ENCODE measurements at regions of chr19 and their contacts with region 1.

Region 1: DNA sequence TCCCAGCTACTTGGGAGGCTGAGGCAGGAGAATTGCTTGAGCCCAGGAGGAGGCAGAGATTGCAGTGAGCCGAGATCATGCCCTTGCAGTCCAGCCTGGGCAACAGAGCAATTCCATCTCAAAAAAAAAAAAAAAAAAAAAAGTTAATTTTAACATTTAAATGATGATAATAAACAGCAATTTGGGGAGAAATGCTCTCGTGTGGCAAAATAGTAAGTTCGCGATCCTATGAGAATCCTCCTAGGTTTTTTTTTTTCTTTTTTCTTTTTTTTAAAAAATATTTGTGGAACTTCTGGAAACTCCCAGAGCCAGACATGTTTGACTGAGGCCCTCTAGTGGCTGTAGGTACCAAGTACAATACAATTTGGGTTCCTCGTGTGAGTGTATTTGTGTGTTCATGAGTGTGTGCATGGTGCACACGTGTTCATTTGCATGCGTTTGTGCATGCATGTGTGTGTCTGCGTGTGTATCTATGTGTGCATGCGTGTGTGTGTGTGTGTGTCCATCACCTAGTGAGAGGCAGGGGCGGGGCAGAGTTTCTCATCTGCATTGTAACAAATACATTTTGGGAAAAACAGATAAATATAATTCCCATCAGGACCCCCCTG is 31.2 kb downstream of the TMPRSS9 start:
- DNase-seq: peak; percentile 76
- H3K4me3 Mint-ChIP-seq: no peak overlapping the region
- H3K27ac Mint-ChIP-seq: no peak overlapping the region
- H3K4me1 Mint-ChIP-seq: peaks cover 12% of the 10 kb centered on the region
- H3K27me3 Mint-ChIP-seq: no peaks in the 10 kb centered on the region
- CTCF ChIP-seq: peak; percentile 78

Region 2: GRCh38 chr19:2151339-2152229 is 239.6 kb before region 1 on chr19 and contains the start of gene AP3D1:
- CTCF ChIA-PET with region 1: interaction called, 11 read pairs
- POLR2A ChIA-PET with region 1: no interaction called
- intact Hi-C with region 1: loop called (anchors 1 kb)
- DNase-seq: peak; percentile 100
- H3K4me3 Mint-ChIP-seq: peak within 1 kb of the TSS; percentile 78
- H3K27ac Mint-ChIP-seq: peak within 1 kb of the TSS; percentile 55
- H3K4me1 Mint-ChIP-seq: peaks cover 16% of the 10 kb centered on the region
- H3K27me3 Mint-ChIP-seq: no peaks in the 10 kb centered on the region
- CTCF ChIP-seq: no peak
- total RNA-seq, gene AP3D1: 172 and 181 TPM in 2 replicates

Region 3: DNA sequence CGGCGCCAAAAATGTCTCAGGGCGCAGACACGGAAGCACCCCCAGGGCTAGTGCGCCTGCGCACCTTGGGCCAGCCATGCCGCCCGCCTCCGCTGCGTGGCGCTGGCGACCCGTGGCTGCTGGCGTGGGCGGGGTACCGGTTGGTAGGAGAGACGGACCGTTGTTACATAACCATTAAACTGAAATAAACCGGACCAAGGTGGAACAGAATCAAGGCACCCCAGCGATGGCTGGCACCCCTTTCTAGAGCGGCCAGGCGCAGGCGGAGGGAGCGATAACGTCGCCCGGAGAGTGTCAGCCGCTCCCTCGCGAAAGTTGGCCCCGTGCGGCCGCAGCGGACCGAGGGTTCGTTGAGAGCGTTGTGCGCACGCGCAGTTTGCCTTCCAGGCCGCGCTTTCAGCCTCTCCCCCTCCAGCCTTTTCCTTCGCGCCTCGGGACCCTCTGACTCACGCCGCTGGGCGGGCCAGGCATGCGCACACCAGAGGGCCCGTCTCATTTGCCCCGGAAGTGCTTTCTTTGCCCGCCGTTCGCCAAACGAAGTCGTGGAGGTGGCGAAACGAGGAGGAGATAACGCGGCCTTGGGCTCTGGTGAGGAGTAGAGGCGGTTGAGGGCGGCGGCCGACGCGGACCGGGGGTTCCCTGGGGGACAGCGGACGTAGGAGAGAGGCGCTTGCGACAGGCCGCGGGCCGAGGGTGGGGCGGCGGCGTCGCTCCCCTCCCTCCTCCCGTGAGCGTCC is 154.7 kb before region 1 on chr19 and contains the starts of genes PLEKHJ1 and SF3A2:
- CTCF ChIA-PET with region 1: interaction called, 6 read pairs
- POLR2A ChIA-PET with region 1: interaction called, 4 read pairs
- intact Hi-C with region 1: loop called (anchors 1 kb)
- DNase-seq: peak; percentile 98
- H3K4me3 Mint-ChIP-seq: peak within 1 kb of the TSS; percentile 86
- H3K27ac Mint-ChIP-seq: peak within 1 kb of the TSS; percentile 99
- H3K4me1 Mint-ChIP-seq: peaks cover 23% of the 10 kb centered on the region
- H3K27me3 Mint-ChIP-seq: no peaks in the 10 kb centered on the region
- CTCF ChIP-seq: peak; percentile 98
- total RNA-seq, gene PLEKHJ1: 44.3 and 54.1 TPM in 2 replicates
- total RNA-seq, gene SF3A2: 101 and 119 TPM in 2 replicates

Region 4: DNA sequence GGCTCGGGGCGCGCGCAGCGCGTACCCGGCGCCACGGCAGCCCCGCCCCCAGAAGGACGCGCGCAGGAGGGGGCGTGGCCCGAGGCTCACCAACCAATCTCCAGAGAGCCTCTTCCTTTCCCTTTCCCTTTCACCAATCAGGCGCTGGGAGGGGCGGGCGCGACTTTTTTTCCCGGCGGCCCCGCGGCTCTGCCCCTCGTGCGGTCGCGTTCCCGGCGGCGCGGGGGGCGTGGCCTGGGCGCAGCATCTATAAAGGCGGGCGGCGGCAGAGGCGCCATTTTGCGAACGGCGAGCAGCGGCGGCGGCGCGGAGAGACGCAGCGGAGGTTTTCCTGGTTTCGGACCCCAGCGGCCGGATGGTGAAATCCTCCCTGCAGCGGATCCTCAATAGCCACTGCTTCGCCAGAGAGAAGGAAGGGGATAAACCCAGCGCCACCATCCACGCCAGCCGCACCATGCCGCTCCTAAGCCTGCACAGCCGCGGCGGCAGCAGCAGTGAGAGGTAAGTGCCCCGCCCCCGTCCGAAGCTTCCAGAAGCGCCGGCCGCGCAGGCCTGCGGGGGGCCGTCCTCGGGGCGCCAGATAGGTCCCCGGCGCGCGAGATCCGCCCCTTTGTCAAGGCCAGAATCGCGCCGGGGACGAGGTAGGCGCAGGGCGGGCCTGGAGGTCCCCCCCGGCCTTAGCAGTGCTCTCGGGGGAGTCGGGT is 121.8 kb before region 1 on chr19:
- CTCF ChIA-PET with region 1: interaction called, 10 read pairs
- POLR2A ChIA-PET with region 1: no interaction called
- intact Hi-C with region 1: no loop called
- DNase-seq: peak; percentile 97
- H3K4me3 Mint-ChIP-seq: peak overlapping the region; percentile 91
- H3K27ac Mint-ChIP-seq: peak overlapping the region; percentile 88
- H3K4me1 Mint-ChIP-seq: peaks cover 26% of the 10 kb centered on the region
- H3K27me3 Mint-ChIP-seq: no peaks in the 10 kb centered on the region
- CTCF ChIP-seq: no peak

Region 5: GRCh38 chr19:2274931-2275535 is 116.2 kb before region 1 on chr19:
- CTCF ChIA-PET with region 1: interaction called, 10 read pairs
- POLR2A ChIA-PET with region 1: no interaction called
- intact Hi-C with region 1: loop called (anchors 1 kb)
- DNase-seq: peak; percentile 74
- H3K4me3 Mint-ChIP-seq: peak overlapping the region; percentile 28
- H3K27ac Mint-ChIP-seq: no peak overlapping the region
- H3K4me1 Mint-ChIP-seq: peaks cover 19% of the 10 kb centered on the region
- H3K27me3 Mint-ChIP-seq: no peaks in the 10 kb centered on the region
- CTCF ChIP-seq: peak; percentile 60

Region 6: DNA sequence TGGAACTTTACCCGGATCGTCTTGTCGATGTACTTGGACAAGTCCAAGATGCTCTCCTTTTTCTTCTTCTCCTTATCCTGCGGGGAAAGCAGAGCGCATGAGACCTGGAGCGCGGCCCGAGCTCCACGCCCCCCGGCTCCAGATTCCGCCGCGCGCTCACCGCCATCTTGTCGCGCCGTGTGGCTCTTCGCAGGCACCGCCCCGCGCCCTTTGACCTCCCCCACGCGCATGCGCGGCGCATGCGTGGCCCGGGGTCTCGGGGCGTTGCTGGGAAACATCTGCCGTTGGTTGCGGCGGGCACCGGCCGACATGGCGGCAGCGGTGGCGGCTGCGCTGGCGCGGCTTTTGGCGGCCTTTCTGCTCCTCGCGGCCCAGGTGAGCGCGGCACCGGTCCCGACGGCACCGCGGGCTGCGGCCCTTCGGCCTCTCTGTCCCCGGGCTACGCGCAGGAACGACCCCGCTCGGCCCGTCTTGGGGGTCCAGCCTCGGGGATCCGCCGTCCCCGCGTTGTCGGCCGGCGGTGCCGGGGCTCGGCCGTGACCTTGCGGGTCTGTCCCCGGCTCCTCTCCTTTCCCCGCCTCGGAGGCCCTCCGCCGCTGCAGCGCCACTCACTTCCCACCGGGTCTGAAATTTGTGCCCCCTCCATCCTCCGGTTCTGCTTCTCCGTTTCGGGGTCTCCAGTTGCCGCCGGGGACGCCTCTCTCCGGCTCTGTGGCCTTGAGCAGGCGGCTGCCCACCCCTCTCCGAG is 62.6 kb before region 1 on chr19 and contains the starts of genes LSM7 and SPPL2B:
- CTCF ChIA-PET with region 1: interaction called, 4 read pairs
- POLR2A ChIA-PET with region 1: no interaction called
- intact Hi-C with region 1: loop called (anchors 2 kb)
- DNase-seq: peak; percentile 91
- H3K4me3 Mint-ChIP-seq: peak within 1 kb of the TSS; percentile 93
- H3K27ac Mint-ChIP-seq: peak within 1 kb of the TSS; percentile 97
- H3K4me1 Mint-ChIP-seq: peaks cover 27% of the 10 kb centered on the region
- H3K27me3 Mint-ChIP-seq: no peaks in the 10 kb centered on the region
- CTCF ChIP-seq: no peak
- total RNA-seq, gene LSM7: 135 and 152 TPM in 2 replicates
- total RNA-seq, gene SPPL2B: 70.1 and 70.9 TPM in 2 replicates

Region 7: GRCh38 chr19:2727640-2727944 is 336.4 kb after region 1 on chr19:
- CTCF ChIA-PET with region 1: no interaction called
- POLR2A ChIA-PET with region 1: no interaction called
- intact Hi-C with region 1: no loop called
- DNase-seq: peak; percentile 33
- H3K4me3 Mint-ChIP-seq: no peak overlapping the region
- H3K27ac Mint-ChIP-seq: no peak overlapping the region
- H3K4me1 Mint-ChIP-seq: peaks cover 11% of the 10 kb centered on the region
- H3K27me3 Mint-ChIP-seq: no peaks in the 10 kb centered on the region
- CTCF ChIP-seq: no peak